Activated CD4-positive, alpha-beta T cell treated with anti-CD3 and anti-CD28 coated beads for 36 hours (primary cell): ENCODE measurements at regions of chr19 and their contacts with region 1.

Region 1: GRCh38 chr19:40139533-40140287 is 49.0 kb upstream of the ZNF780A start:
- DNase-seq: no peak
- ATAC-seq: no peak
- H3K4me3 Mint-ChIP-seq: no peak overlapping the region
- H3K27ac Mint-ChIP-seq: no peak overlapping the region
- H3K4me1 Mint-ChIP-seq: peaks cover 13% of the 10 kb centered on the region
- H3K27me3 Mint-ChIP-seq: no peaks in the 10 kb centered on the region

Region 2: DNA sequence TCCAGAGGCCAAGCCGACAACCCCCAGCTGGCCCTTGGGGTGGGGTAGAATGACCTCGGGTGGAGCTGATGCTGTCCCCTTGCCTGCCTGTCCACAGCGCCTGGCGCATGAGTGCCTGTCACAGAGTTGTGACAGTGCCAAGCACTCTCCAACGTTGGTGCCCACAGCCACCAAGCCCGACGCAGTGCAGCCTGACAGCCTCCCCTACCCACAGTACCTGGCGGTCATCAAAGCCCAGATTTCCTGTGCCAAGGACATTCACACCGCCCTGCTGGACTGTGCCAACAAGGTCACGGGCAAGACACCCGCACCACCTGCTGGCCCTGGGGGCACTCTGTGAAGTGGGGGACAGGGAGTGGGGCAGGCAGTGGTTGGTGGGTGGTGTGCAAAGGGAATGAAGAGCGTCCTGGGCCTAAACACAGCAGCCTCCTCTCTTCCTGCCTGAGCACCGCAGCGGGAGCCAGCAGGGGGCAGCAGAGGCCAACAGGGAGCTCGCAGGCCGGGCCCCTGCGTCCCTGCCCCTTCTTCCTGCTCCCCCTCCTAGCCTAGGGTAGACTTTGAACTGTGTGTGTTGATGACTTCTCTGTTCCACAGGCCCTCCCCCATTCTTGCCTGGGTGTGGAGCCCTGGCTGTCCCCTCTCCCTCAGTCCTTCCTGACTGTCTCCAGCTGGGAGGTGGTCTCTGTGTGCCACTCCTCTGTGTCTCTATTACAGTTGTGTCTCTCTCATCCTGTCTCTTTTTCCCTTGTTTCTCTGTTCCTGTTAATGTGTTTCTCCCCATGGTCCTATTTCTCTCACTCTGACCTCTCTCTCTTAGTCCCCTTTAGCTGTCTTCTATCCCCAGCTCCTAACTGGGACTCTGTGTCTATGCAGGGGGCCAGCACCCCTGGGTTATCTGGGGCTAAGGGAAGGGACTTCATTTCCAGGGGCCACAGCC is 742.1 kb before region 1 on chr19:
- CTCF ChIA-PET with region 1: no interaction called
- POLR2A ChIA-PET with region 1: no interaction called
- intact Hi-C with region 1: no loop called
- DNase-seq: peak; percentile 97
- ATAC-seq: peak; percentile 58
- H3K4me3 Mint-ChIP-seq: peak overlapping the region; percentile 52
- H3K27ac Mint-ChIP-seq: peak overlapping the region; percentile 97
- H3K4me1 Mint-ChIP-seq: peaks cover 59% of the 10 kb centered on the region
- H3K27me3 Mint-ChIP-seq: no peaks in the 10 kb centered on the region

Region 3: DNA sequence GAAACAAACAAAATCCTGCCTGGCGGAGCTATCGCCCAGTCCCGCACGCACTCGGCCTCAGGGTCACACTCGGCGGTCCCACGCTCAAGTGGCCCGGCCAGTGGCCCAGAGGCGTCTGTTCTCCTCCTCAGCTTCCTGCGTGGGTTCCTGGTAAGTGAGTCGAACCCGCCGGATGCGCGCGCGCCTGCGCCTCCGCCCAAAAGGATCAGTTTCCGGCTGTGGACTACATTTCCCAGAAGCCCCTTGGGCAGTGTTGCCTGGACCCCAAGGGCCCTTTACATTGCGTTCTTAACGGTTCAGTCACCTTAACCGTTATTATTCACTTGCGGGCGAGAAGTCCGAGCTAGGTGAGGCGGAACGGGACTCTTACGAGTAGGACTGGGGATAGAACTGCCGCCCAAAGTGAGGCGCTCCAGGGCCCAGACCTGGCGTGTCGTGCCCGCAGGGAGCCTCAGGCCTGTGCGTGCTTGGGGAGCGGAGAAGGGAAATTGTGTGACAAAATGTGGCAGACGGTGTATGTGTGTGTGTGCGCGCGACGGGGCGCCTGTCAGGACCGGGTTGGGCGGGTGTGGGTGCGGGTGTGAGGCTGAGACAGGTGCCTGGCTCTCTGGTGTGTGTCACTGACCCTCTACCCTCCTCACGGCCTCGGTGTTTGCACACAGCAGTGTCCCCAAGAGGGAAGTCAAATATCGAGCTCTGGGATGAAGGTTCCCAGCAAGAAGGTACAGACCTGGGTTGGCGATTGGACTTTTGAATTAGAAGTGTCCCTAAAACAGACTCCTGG is 142.7 kb before region 1 on chr19 and contains the start of gene ZNF546:
- CTCF ChIA-PET with region 1: no interaction called
- POLR2A ChIA-PET with region 1: no interaction called
- intact Hi-C with region 1: loop called in 1 of 2 experiments (anchors 2 kb)
- DNase-seq: peak; percentile 94
- ATAC-seq: peak; percentile 90
- H3K4me3 Mint-ChIP-seq: peak within 1 kb of the TSS; percentile 90
- H3K27ac Mint-ChIP-seq: peak within 1 kb of the TSS; percentile 99
- H3K4me1 Mint-ChIP-seq: peaks cover 48% of the 10 kb centered on the region
- H3K27me3 Mint-ChIP-seq: no peaks in the 10 kb centered on the region
- total RNA-seq, gene ZNF546: 6.3 to 6.9 TPM

Region 4: GRCh38 chr19:40165362-40165937 is 25.7 kb after region 1 on chr19:
- CTCF ChIA-PET with region 1: interaction called, 10 read pairs
- POLR2A ChIA-PET with region 1: no interaction called
- intact Hi-C with region 1: loop called (anchors 1 kb)
- DNase-seq: peak; percentile 84
- ATAC-seq: peak; percentile 90
- H3K4me3 Mint-ChIP-seq: no peak overlapping the region
- H3K27ac Mint-ChIP-seq: no peak overlapping the region
- H3K4me1 Mint-ChIP-seq: peaks cover 8% of the 10 kb centered on the region
- H3K27me3 Mint-ChIP-seq: no peaks in the 10 kb centered on the region

Region 5: DNA sequence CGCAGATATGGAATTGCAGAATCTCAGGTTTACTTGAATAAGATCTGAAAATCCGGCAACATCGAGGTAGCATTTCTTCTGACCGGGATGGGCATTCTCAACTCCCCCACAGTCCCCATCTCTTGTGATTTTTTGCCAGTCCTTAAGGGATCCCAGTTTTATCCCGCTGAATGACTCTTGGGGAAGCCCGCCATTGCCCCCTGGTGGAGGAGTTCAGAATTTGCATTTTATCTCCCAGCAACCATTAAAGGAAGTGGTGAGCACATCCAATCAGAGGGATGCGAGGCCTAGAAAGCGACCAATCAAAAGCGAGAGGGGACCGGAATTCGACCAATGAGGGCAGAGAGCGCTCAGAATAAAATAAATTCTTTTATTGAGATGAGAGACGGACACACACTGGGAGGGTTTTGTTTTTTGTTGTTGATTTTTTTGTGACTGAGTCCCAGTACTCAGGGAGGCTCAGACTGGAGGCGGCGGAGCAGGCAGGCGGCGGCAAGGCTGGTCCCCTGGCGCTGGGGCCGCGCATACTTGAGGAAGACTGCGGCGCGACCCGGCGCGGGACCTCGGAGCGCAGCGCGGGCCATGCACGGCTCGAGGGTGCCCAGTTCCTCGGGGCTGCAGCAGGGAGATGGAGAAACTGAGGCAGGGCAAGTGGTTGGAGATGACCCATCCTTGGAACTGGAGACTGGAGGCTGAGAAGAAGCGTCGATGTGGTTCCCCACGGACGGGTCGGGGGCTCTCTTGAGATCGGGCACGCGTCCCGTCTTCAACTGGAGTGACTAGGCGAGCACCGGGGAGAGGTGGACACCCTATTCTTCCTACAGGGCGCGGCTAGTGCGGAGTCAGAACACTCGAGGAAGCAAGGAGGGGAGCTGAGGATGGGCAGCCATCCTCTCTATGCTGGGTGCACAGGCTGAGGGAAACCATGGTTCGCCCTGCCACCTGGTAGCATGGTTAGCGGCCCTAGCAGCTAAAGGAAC is 82.4 kb after region 1 on chr19:
- CTCF ChIA-PET with region 1: interaction called, 5 read pairs
- POLR2A ChIA-PET with region 1: interaction called, 3 read pairs
- intact Hi-C with region 1: loop called (anchors 1 kb)
- DNase-seq: peak; percentile 84
- ATAC-seq: peak; percentile 85
- H3K4me3 Mint-ChIP-seq: no peak overlapping the region
- H3K27ac Mint-ChIP-seq: no peak overlapping the region
- H3K4me1 Mint-ChIP-seq: peaks cover 13% of the 10 kb centered on the region
- H3K27me3 Mint-ChIP-seq: peaks cover 57% of the 10 kb centered on the region

Region 6: GRCh38 chr19:40252395-40252794 is 112.7 kb after region 1 on chr19:
- CTCF ChIA-PET with region 1: no interaction called
- POLR2A ChIA-PET with region 1: no interaction called
- intact Hi-C with region 1: no loop called
- DNase-seq: no peak
- ATAC-seq: no peak
- H3K4me3 Mint-ChIP-seq: no peak overlapping the region
- H3K27ac Mint-ChIP-seq: no peak overlapping the region
- H3K4me1 Mint-ChIP-seq: peaks cover 8% of the 10 kb centered on the region
- H3K27me3 Mint-ChIP-seq: no peaks in the 10 kb centered on the region

Region 7: DNA sequence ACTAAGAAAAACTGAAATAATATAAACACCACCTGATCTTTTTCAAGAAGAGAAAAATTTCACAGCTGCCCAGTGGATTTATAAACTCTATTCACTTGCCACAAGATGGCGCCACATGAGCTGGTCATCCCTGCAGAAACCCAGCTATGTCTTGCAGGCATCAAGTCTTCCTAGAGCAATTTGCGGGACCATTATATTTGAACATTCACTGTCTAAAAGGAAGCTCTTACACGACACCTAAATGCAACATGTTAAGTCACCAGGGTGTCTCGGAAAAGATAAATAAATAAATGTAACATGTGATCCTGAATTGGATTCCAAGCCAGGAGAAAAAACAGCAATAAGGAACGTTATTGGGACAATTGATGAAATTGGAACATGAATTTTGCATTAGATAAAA is 165.7 kb after region 1 on chr19:
- CTCF ChIA-PET with region 1: interaction called, 6 read pairs
- POLR2A ChIA-PET with region 1: no interaction called
- intact Hi-C with region 1: loop called in 1 of 2 experiments (anchors 5 kb)
- DNase-seq: peak; percentile 90
- ATAC-seq: peak; percentile 83
- H3K4me3 Mint-ChIP-seq: no peak overlapping the region
- H3K27ac Mint-ChIP-seq: no peak overlapping the region
- H3K4me1 Mint-ChIP-seq: no peaks in the 10 kb centered on the region
- H3K27me3 Mint-ChIP-seq: no peaks in the 10 kb centered on the region